ENCODE measurements at regions of chr1 and their contacts with region 1.

Region 1: GRCh38 chr1:207579436-207579799 is 65.5 kb upstream of the CR1L start:
- DNase-seq: peak; percentile 30
- CTCF ChIP-seq: peak; percentile 47

Region 2: GRCh38 chr1:207672522-207673130 is 93.2 kb after region 1 on chr1:
- CTCF ChIA-PET with region 1: interaction called, 21 read pairs
- POLR2A ChIA-PET with region 1: no interaction called
- DNase-seq: peak; percentile 28
- CTCF ChIP-seq: peak; percentile 51

Measured in GM10248 (cell line).